OCI-LY7 (cell line): ENCODE measurements at regions of chr18 and their contacts with region 1.

Region 1: GRCh38 chr18:9136315-9137155 is at the start of gene ANKRD12:
- DNase-seq: peak; percentile 98
- H3K4me3 ChIP-seq: peak within 1 kb of the TSS; percentile 84
- H3K27ac ChIP-seq: peak within 1 kb of the TSS; percentile 94
- H3K4me1 ChIP-seq: peaks cover 45% of the 10 kb centered on the region
- CTCF ChIP-seq: no peak
- total RNA-seq, gene ANKRD12: 65.9 and 74.5 TPM in 2 replicates

Region 2: DNA sequence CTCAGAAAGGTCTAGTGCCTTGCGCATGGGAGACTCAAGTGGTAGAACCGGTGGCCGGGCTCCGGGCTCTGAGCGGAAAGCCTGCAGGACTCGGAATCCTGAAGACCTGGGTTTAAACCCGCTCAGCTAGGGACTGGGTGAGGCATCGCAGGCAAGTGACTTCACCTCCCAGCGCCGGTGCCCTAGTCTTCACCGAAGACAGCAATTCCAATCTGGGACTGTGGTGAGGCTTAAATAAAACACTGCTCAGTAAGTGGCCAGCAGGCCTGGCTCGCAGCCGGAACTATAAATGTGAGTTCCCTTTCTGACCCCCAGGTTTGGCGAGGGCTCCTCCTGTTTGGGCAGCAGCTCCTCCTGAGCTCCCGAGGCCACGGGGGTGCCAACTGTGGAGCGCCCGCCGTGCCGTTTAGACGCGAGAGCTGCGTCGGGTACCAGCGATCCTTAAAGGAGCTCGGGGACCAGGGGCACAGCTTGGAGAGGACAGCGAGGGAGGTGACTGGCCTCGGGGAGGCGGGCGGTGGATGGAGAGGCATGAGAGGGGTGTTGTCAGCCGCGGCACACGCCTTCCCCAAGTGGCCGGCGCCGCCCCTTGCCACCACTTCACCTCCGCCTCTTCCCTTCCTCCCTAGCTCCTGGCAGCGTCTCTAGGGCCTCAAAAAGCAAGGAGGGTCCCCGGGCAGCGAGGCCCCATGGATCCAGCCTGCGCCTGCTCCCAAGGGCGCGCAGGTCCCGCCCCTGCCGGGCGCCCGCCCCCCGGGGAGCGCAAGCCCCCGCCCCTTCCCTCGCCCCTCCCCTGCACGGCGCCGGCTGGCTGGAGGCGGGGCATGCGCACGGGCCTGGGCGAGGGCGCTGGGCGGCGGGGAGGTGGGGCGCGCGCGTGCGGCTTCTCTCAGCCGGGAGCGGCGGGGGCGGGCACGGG is 431.9 kb before region 1 on chr18:
- CTCF ChIA-PET with region 1: no interaction called
- POLR2A ChIA-PET with region 1: no interaction called
- intact Hi-C with region 1: loop called (anchors 5 kb)
- DNase-seq: peak; percentile 91
- H3K4me3 ChIP-seq: peak overlapping the region; percentile 67
- H3K27ac ChIP-seq: no peak overlapping the region
- H3K4me1 ChIP-seq: peaks cover 24% of the 10 kb centered on the region
- CTCF ChIP-seq: no peak

Region 3: GRCh38 chr18:9066817-9067306 is 69.7 kb before region 1 on chr18:
- CTCF ChIA-PET with region 1: no interaction called
- POLR2A ChIA-PET with region 1: interaction called, 23 read pairs
- intact Hi-C with region 1: no loop called
- DNase-seq: peak; percentile 87
- H3K4me3 ChIP-seq: peak overlapping the region; percentile 30
- H3K27ac ChIP-seq: peak overlapping the region; percentile 94
- H3K4me1 ChIP-seq: peaks cover 86% of the 10 kb centered on the region
- CTCF ChIP-seq: no peak

Region 4: GRCh38 chr18:9102508-9103375 is 33.8 kb before region 1 on chr18 and contains the start of gene NDUFV2:
- CTCF ChIA-PET with region 1: interaction called, 5 read pairs
- POLR2A ChIA-PET with region 1: interaction called, 49 read pairs
- intact Hi-C with region 1: loop called (anchors 1 kb)
- DNase-seq: peak; percentile 97
- H3K4me3 ChIP-seq: peak within 1 kb of the TSS; percentile 93
- H3K27ac ChIP-seq: peak within 1 kb of the TSS; percentile 75
- H3K4me1 ChIP-seq: peaks cover 41% of the 10 kb centered on the region
- CTCF ChIP-seq: no peak
- total RNA-seq, gene NDUFV2: 145 and 185 TPM in 2 replicates

Region 5: GRCh38 chr18:9117980-9118841 is 18.3 kb before region 1 on chr18:
- CTCF ChIA-PET with region 1: no interaction called
- POLR2A ChIA-PET with region 1: interaction called, 10 read pairs
- intact Hi-C with region 1: no loop called
- DNase-seq: no peak
- H3K4me3 ChIP-seq: peak overlapping the region; percentile 6
- H3K27ac ChIP-seq: peak overlapping the region; percentile 34
- H3K4me1 ChIP-seq: peaks cover 34% of the 10 kb centered on the region
- CTCF ChIP-seq: no peak

Region 6: GRCh38 chr18:9184998-9185613 is 48.6 kb after region 1 on chr18:
- CTCF ChIA-PET with region 1: no interaction called
- POLR2A ChIA-PET with region 1: no interaction called
- intact Hi-C with region 1: no loop called
- DNase-seq: no peak
- H3K4me3 ChIP-seq: no peak overlapping the region
- H3K27ac ChIP-seq: no peak overlapping the region
- H3K4me1 ChIP-seq: no peaks in the 10 kb centered on the region
- CTCF ChIP-seq: no peak

Region 7: GRCh38 chr18:9334329-9334972 is 197.9 kb after region 1 on chr18 and contains the start of gene TWSG1:
- CTCF ChIA-PET with region 1: no interaction called
- POLR2A ChIA-PET with region 1: no interaction called
- intact Hi-C with region 1: loop called (anchors 2 kb)
- DNase-seq: peak; percentile 96
- H3K4me3 ChIP-seq: peak within 1 kb of the TSS; percentile 96
- H3K27ac ChIP-seq: no peak within 1 kb of the TSS
- H3K4me1 ChIP-seq: peaks cover 8% of the 10 kb centered on the region
- CTCF ChIP-seq: peak; percentile 32; the same call in 1 of the 2 replicates
- total RNA-seq, gene TWSG1: 7.4 and 7.5 TPM in 2 replicates

Region 8: GRCh38 chr18:9474983-9475642 is 338.6 kb after region 1 on chr18 and contains the start of gene RALBP1:
- CTCF ChIA-PET with region 1: no interaction called
- POLR2A ChIA-PET with region 1: interaction called, 3 read pairs
- intact Hi-C with region 1: loop called (anchors 10 kb)
- DNase-seq: peak; percentile 99
- H3K4me3 ChIP-seq: peak within 1 kb of the TSS; percentile 99
- H3K27ac ChIP-seq: peak within 1 kb of the TSS; percentile 85
- H3K4me1 ChIP-seq: peaks cover 30% of the 10 kb centered on the region
- CTCF ChIP-seq: 0 out of 2 replicates have a peak, but pooled peaks have one; percentile 23
- total RNA-seq, gene RALBP1: 78.5 and 80.2 TPM in 2 replicates

Region 9: DNA sequence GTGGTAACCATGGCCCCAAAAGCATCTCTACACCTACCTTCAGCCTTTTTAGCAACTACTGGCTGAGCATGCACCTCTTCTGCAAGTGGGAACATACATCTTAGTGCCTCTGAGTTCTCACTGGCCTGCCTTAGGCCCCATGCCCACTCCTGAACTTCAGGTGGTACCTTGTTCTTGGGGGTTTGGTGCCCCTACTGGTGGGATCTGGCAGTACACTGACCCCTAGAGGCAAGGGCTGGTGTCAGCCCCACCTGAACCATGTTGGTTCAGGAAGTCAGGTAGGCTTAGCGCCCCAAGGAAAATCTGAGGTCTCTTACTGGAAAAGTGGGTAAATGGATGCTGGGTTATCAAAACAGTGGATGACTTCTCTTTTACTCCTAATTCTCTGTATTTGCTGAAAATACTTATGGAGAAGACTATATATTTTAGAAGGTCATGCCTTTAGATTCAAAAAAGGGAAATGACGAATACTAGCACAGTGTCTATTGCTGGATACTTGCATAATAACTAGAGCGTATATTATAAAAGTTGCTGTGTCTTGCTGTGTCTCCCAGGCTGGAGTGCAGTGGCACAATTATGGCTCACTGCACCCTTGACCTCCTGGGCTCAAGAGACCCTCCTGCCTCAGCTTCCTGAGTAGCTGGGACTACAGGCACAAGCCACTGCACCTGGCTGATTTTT is 656.2 kb after region 1 on chr18:
- CTCF ChIA-PET with region 1: no interaction called
- POLR2A ChIA-PET with region 1: no interaction called
- intact Hi-C with region 1: no loop called
- DNase-seq: peak; percentile 27
- H3K4me3 ChIP-seq: no peak overlapping the region
- H3K27ac ChIP-seq: no peak overlapping the region
- H3K4me1 ChIP-seq: no peaks in the 10 kb centered on the region
- CTCF ChIP-seq: peak; percentile 78